Prostate gland (tissue), 2 donors: ENCODE measurements at regions of chr17 and their contacts with region 1.

Region 1: GRCh38 chr17:61157246-61157886 is 242.3 kb upstream of the TBX2 start:
- DNase-seq: no peak
- H3K4me3 ChIP-seq: peak overlapping the region in 1 of 2 donors; percentile 14
- H3K27ac ChIP-seq: no peak overlapping the region
- H3K4me1 ChIP-seq: no peaks in the 10 kb centered on the region
- H3K27me3 ChIP-seq: no peaks in the 10 kb centered on the region
- CTCF ChIP-seq: no peak
- POLR2A ChIP-seq: no peak

Region 2: DNA sequence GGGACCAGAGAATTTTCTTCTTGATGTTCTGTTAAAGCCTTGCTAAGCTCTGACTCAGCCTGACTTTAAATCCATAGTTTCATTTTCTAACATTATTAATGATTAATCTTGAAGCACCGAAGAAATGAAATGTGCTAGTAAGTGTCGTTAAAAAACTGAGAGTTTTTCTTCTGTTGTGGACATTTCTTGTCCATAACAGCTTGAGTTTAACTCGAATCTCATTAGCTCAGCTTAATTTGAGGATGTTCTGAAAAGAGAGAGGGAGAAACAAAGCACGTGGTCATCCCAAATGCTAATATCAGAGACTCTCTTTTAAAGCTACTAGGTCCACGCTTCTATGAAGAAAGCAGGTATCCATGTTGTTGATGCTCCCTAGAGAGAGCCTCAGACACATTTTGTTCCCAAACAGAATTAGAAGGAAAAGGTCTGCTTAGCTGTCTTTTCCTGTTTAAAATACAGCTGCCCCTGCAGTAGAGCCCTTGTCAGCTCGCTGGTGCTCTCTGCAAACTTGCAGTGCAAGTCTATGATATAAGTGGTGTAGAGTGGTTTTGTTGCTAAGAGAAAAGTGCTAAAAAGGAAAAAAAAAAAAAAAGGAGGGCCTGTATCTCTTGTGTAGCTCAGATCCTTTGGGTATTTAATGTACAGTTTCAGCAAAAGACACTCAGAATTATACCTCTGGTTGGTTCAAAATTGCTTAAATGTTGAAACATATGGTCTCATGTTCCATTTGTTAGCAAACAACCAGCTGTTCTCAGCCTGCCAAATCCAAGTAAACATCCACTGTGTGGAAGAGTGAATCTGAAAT is 51.1 kb after region 1 on chr17:
- intact Hi-C with region 1: loop called (anchors 10 kb)
- DNase-seq: no peak
- H3K4me3 ChIP-seq: no peak overlapping the region
- H3K27ac ChIP-seq: peak overlapping the region; percentile 45 to 54
- H3K4me1 ChIP-seq: no peaks in the 10 kb centered on the region
- H3K27me3 ChIP-seq: no peaks in the 10 kb centered on the region
- CTCF ChIP-seq: no peak
- POLR2A ChIP-seq: no peak